Caco-2 (cell line): ENCODE measurements at regions of chr1 and their contacts with region 1.

Region 1: DNA sequence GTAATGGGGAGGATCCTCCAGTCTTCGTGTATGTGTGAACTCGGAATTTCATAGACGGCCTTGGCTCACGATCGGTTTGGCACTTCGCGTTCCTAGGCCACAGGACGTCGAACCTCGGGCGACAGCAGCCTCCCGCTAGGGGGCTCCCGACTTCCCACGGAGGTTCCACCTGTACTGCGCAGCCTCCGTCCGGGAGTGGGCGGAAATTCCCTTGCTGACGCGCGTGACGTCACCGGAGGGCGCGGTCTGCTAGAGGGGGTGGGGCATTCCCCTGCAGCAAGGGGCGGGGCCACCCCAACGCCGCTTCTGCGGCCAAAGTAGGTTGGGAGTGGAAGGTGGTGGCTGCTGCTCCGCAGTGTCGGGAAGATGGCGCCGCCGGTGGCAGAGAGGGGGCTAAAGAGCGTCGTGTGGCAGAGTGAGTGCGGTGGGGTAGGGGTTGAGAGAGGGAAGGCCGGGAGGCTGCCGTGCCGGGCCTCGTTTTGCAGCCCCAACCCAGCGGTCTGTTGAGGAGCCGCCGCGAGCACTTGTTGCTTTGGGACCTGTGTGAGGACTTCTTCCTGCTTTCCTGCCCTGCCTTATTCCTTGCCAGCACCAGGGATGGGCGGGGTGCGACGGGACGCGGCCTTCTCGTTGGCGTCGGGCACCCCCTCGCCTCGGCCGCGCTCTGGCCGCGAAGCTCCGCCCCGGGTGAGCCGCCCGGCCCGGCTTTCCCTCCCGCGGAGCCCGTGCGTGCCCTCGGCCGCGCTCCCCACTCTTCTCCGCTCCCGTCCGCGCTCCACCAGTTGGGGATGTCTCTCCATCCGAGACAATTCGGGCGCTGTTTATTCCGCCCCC is at the start of gene STXBP3:
- DNase-seq: peak; percentile 97
- H3K4me3 ChIP-seq: peak within 1 kb of the TSS; percentile 65
- H3K4me3 Mint-ChIP-seq: peak within 1 kb of the TSS; percentile 100
- H3K27ac Mint-ChIP-seq: peak within 1 kb of the TSS; percentile 100
- H3K4me1 ChIP-seq: no peaks in the 10 kb centered on the region
- H3K4me1 Mint-ChIP-seq: peaks cover 9% of the 10 kb centered on the region
- H3K27me3 ChIP-seq: no peaks in the 10 kb centered on the region
- H3K27me3 Mint-ChIP-seq: no peaks in the 10 kb centered on the region
- CTCF ChIP-seq: peak; percentile 61 to 91
- total RNA-seq, gene STXBP3: 24.1 and 34.3 TPM in 2 replicates

Region 2: GRCh38 chr1:108703939-108704900 is 42.4 kb before region 1 on chr1:
- CTCF ChIA-PET with region 1: no interaction called
- POLR2A ChIA-PET with region 1: no interaction called
- intact Hi-C with region 1: loop called (anchors 2 kb)
- DNase-seq: no peak
- H3K4me3 ChIP-seq: no peak overlapping the region
- H3K4me3 Mint-ChIP-seq: no peak overlapping the region
- H3K27ac Mint-ChIP-seq: no peak overlapping the region
- H3K4me1 ChIP-seq: no peaks in the 10 kb centered on the region; the same call in 1 of the 2 replicates
- H3K4me1 Mint-ChIP-seq: peaks cover 6% of the 10 kb centered on the region
- H3K27me3 ChIP-seq: no peaks in the 10 kb centered on the region
- H3K27me3 Mint-ChIP-seq: no peaks in the 10 kb centered on the region
- CTCF ChIP-seq: no peak

Region 3: DNA sequence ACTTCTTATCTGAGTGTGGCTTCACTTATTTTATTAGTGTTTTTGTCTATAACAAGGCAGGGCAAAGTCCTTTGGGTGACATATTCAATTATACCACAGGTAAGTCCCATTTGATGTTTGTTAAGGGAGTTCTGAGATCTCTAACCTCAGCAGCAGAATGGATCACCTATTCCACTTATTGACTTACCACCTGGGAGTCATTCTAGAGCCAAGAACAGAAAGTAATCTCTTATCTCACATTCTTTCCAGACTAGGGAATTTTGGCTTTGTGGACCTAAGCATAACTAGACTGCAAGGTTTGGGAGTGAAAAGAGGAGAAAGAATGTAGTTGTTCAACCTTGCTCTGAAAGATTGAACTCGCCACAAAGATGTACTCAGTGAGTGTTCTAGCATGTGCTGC is 20.7 kb before region 1 on chr1:
- CTCF ChIA-PET with region 1: no interaction called
- POLR2A ChIA-PET with region 1: no interaction called
- intact Hi-C with region 1: loop called (anchors 1 kb)
- DNase-seq: peak in 1 of 2 experiments; percentile 50
- H3K4me3 ChIP-seq: no peak overlapping the region
- H3K4me3 Mint-ChIP-seq: no peak overlapping the region
- H3K27ac Mint-ChIP-seq: peak overlapping the region; percentile 70
- H3K4me1 ChIP-seq: peaks cover 23% of the 10 kb centered on the region
- H3K4me1 Mint-ChIP-seq: no peaks in the 10 kb centered on the region
- H3K27me3 ChIP-seq: no peaks in the 10 kb centered on the region
- H3K27me3 Mint-ChIP-seq: no peaks in the 10 kb centered on the region
- CTCF ChIP-seq: no peak

Region 4: GRCh38 chr1:108780937-108781574 is 34.5 kb after region 1 on chr1:
- CTCF ChIA-PET with region 1: no interaction called
- POLR2A ChIA-PET with region 1: no interaction called
- intact Hi-C with region 1: no loop called
- DNase-seq: no peak
- H3K4me3 ChIP-seq: no peak overlapping the region
- H3K4me3 Mint-ChIP-seq: no peak overlapping the region
- H3K27ac Mint-ChIP-seq: no peak overlapping the region
- H3K4me1 ChIP-seq: peaks cover 9% of the 10 kb centered on the region; the same call in 1 of the 2 replicates
- H3K4me1 Mint-ChIP-seq: no peaks in the 10 kb centered on the region
- H3K27me3 ChIP-seq: no peaks in the 10 kb centered on the region
- H3K27me3 Mint-ChIP-seq: no peaks in the 10 kb centered on the region
- CTCF ChIP-seq: no peak